ENCODE measurements at regions of chr7 and their contacts with region 1.

Region 1: GRCh38 chr7:33109005-33109757 is at the start of gene RP9:
- DNase-seq: peak; percentile 74 to 87
- ATAC-seq: peak; percentile 89 to 96 (median 94)
- H3K4me3 ChIP-seq: peak within 1 kb of the TSS; percentile 59
- H3K4me3 Mint-ChIP-seq: peak within 1 kb of the TSS; percentile 91
- H3K27ac ChIP-seq: peak within 1 kb of the TSS; percentile 51
- H3K27ac Mint-ChIP-seq: peak within 1 kb of the TSS; percentile 79 to 80
- H3K4me1 ChIP-seq: peaks cover 22% of the 10 kb centered on the region
- H3K4me1 Mint-ChIP-seq: peaks cover 34 to 39% of the 10 kb centered on the region in 2 donors
- H3K27me3 ChIP-seq: no peaks in the 10 kb centered on the region
- H3K27me3 Mint-ChIP-seq: peaks cover 23 to 30% of the 10 kb centered on the region in 2 donors
- CTCF ChIP-seq: peak; percentile 52
- total RNA-seq, gene RP9: 19.1 to 27.6 (median 21.9) TPM

Region 2: GRCh38 chr7:33087858-33088257 is 21.3 kb before region 1 on chr7:
- intact Hi-C with region 1: no loop called
- DNase-seq: no peak
- ATAC-seq: no peak
- H3K4me3 ChIP-seq: no peak overlapping the region
- H3K4me3 Mint-ChIP-seq: no peak overlapping the region
- H3K27ac ChIP-seq: no peak overlapping the region
- H3K27ac Mint-ChIP-seq: no peak overlapping the region
- H3K4me1 ChIP-seq: no peaks in the 10 kb centered on the region
- H3K4me1 Mint-ChIP-seq: no peaks in the 10 kb centered on the region
- H3K27me3 ChIP-seq: peaks cover 2% of the 10 kb centered on the region
- H3K27me3 Mint-ChIP-seq: peaks cover 0 to 9% of the 10 kb centered on the region in 2 donors
- CTCF ChIP-seq: no peak

Region 3: GRCh38 chr7:33128990-33129805 is 20.0 kb after region 1 on chr7 and contains the start of gene BBS9:
- intact Hi-C with region 1: loop called (anchors 1 kb)
- DNase-seq: peak; percentile 88 to 94
- ATAC-seq: peak; percentile 95 to 98 (median 97)
- H3K4me3 ChIP-seq: peak within 1 kb of the TSS; percentile 62
- H3K4me3 Mint-ChIP-seq: peak within 1 kb of the TSS; percentile 97
- H3K27ac ChIP-seq: peak within 1 kb of the TSS; percentile 42
- H3K27ac Mint-ChIP-seq: peak within 1 kb of the TSS; percentile 88 to 89
- H3K4me1 ChIP-seq: peaks cover 8% of the 10 kb centered on the region
- H3K4me1 Mint-ChIP-seq: peaks cover 11 to 20% of the 10 kb centered on the region in 2 donors
- H3K27me3 ChIP-seq: no peaks in the 10 kb centered on the region
- H3K27me3 Mint-ChIP-seq: no peaks in the 10 kb centered on the region
- CTCF ChIP-seq: no peak
- total RNA-seq, gene BBS9: 25.1 to 34.6 (median 34.4) TPM

Region 4: GRCh38 chr7:33287748-33288147 is 178.6 kb after region 1 on chr7:
- intact Hi-C with region 1: no loop called
- DNase-seq: no peak
- ATAC-seq: no peak
- H3K4me3 ChIP-seq: no peak overlapping the region
- H3K4me3 Mint-ChIP-seq: no peak overlapping the region
- H3K27ac ChIP-seq: no peak overlapping the region
- H3K27ac Mint-ChIP-seq: no peak overlapping the region
- H3K4me1 ChIP-seq: no peaks in the 10 kb centered on the region
- H3K4me1 Mint-ChIP-seq: no peaks in the 10 kb centered on the region
- H3K27me3 ChIP-seq: no peaks in the 10 kb centered on the region
- H3K27me3 Mint-ChIP-seq: no peaks in the 10 kb centered on the region
- CTCF ChIP-seq: no peak